ENCODE measurements at regions of chr6 and their contacts with region 1.

Region 1: DNA sequence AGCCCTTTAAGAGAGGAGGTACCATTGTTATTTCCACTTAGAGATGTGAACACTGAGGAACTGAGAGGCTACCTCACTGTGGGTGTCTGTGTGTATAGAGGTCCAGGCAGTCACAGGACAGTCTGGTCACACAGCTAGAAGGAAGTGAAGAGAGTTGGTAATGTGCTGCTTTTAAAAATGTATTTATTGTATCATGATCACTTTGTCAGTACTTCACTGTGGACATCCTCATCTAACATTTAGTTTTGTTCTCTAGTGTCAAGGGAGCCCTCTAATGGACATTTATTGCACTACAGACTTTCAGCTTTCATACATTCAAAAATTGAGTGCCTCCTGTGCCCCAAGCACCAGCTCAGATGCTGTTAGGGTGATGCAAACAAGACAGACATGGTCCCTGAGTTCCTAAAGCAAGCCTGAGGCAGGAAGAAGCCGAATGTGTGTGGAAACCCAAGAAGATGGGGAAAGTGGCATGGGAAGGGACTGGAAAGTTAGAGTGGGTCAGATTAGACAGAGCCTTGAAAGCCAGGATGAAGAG is 123.0 kb downstream of the SLC16A10 start:
- DNase-seq: no peak
- ATAC-seq: no peak

Region 2: GRCh38 chr6:111011360-111012142 is 198.7 kb before region 1 on chr6:
- intact Hi-C with region 1: loop called (anchors 2 kb)
- DNase-seq: no peak
- ATAC-seq: peak; percentile 74

Region 3: DNA sequence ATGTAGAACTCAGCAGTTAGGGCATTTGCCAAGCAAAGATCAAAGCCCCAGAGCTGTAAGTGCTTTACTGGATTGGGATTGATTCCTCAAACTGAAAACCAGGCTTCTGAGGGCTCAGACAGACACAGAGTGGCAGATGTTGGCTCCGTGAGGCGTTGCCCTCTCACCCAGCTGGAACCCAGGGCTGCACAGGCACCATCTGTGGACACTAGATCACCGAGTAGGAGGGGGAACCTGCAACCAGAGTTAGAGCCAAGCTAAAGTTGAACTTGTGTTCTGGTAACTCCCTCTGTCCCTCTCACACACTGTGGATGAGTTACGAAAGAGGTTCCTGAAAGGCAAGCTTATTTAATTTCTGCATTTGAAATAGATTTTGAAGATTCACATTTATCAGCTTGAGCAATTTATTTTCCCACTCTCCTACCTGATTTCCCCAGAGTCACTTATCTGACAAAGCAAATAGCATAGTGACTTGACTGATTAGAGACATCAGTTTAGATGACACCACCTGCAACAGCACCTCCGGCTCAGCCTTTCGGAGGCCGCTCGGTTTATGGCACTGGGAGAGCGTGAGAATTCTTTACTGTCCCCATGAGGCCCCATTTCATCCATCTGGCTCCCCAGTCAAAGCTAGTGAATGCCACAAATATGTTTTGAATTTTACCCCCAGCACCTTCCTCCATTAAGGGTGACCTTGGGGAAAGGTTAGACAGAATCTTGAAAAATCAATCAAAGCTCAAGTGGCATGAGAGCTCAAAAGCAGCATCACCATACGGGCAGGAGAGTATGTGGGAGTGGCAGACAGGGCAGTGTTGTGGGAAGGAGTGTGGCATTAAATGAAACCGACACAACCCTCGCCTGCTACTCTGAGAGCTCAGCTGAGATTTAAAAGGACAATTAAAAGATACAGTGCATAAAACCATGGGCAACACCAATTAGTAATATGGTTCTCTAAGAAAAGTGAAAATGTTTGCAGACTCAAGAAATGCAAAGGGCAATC is 180.0 kb before region 1 on chr6:
- intact Hi-C with region 1: loop called (anchors 5 kb)
- DNase-seq: peak; percentile 74
- ATAC-seq: peak; percentile 91

Region 4: DNA sequence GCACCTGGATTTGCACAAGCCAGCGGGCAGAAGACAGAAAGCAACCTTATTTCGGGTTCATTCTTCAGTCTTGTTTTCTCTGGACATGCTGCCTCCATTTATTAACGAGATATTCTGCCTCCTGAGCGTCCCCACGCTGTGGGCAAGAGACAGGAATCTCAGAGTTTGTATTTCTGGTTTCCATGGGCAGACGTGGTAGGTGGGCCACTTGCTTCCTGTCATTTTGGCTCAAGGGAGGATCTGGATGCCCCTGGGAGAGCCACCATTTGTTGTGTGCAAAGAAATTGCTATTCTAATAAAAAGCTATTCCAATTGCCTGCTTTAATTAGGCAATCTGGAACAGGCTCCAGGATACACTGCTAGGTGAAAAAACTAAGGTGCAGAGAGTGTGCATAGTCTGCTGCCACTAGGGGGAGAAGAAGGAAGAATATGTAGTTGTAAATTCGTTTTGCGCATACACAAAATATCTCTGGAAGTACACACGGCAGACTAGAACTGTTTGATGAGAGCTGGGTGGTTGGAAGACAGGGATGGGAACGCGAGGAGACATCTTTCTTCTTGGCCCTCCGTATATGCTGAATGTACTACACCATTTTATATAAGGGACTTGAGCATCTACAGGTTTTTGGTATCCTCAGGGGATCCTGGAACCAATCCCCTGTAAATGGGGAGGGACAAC is 153.0 kb before region 1 on chr6:
- intact Hi-C with region 1: loop called (anchors 2 kb)
- DNase-seq: no peak
- ATAC-seq: peak; percentile 43

Region 5: GRCh38 chr6:111291336-111292259 is 81.3 kb after region 1 on chr6:
- intact Hi-C with region 1: no loop called
- DNase-seq: no peak
- ATAC-seq: no peak